ENCODE measurements at regions of chr3 and their contacts with region 1.

Region 1: DNA sequence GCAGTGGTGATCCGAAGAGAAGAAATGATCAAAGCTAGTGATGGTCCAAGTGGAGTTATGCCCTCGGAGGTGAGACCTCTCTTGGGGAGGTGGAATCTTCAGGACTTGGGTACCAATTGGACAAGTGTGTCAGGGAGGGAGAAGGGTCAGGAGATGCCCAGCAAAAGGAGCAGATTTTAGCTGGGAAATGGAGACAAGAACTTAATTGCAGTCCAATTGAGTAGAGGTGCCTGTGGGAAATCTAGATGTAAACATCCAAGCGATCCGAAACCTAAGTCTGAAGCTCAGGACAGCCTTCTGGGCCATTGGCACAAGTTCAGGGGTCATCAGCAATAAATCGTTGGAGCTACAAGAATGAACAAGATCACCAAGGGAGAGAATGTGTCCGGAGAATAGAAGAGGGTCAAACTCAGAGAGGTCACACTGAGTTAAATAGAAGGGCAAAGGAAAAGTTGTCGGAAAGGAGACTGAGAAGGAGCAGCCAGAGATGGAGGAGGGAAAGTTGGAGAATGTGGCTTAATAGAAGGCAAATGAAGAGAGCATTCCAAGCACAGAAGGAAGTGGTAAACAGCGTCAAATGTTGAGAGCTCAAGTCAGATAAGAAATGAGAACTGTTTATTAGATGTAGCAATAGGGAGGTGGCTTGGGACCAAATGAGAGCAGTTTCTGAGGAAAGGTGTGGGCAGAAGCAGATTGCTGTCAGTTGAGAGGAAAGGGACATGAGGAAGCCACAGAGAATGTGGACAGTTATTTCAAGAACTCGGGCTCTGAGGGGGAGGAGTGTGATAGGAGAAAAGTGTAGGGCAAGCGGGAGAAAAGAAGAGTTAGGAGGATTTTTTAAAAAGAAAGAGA is 64.2 kb upstream of the FNDC3B start:
- DNase-seq: no peak
- H3K4me3 Mint-ChIP-seq: no peak overlapping the region
- H3K27ac Mint-ChIP-seq: no peak overlapping the region
- H3K4me1 Mint-ChIP-seq: peaks cover 9% of the 10 kb centered on the region
- H3K27me3 Mint-ChIP-seq: no peaks in the 10 kb centered on the region

Region 2: DNA sequence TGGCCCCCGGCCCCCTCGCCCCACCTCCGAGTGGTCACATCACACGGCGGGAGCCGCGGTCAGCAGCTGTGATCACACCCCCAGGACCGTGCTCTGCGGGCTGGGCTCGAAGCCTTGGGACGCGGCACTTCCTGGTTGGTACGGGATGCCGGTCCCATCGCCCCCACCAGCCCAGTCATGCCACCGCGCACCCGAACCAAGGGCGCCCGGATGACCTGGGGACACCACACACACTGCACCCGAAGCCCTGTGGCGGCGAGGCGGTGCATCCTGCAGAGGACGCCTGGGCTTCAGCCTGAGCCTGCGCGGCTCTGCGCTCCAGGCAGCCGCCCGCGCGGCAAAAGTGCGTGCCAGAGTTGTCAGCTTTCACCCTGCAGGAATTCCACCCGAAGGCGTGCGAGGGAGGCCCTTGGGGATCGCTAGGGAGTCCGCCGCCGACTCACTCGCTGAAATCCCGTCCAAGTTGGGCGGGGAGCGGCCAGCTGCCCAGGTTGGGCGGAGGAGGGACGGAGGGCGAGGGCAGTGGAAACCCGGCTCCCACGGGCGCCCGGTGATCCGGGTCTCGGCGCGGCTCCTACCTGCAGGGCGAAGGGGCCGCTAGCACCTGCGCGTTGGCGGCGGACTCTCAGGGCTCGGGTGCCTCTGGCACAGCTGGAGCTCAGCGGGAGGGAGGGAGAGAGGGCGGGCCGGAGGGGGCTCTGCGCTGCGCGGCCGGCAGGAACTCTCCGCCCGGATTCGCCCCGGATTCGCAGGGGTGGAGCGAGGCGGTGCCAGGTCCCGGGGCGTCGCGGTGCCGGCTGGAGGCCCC is 165.2 kb before region 1 on chr3 and contains the start of gene PLD1:
- intact Hi-C with region 1: loop called (anchors 10 kb)
- DNase-seq: peak; percentile 51
- H3K4me3 Mint-ChIP-seq: peak within 1 kb of the TSS; percentile 77
- H3K27ac Mint-ChIP-seq: peak within 1 kb of the TSS; percentile 47
- H3K4me1 Mint-ChIP-seq: peaks cover 43% of the 10 kb centered on the region
- H3K27me3 Mint-ChIP-seq: peaks cover 24% of the 10 kb centered on the region
- total RNA-seq, gene PLD1: 1.0 and 1.1 TPM in 2 replicates

Region 3: GRCh38 chr3:171874251-171874679 is 100.9 kb before region 1 on chr3:
- intact Hi-C with region 1: loop called (anchors 10 kb)
- DNase-seq: no peak
- H3K4me3 Mint-ChIP-seq: no peak overlapping the region
- H3K27ac Mint-ChIP-seq: no peak overlapping the region
- H3K4me1 Mint-ChIP-seq: peaks cover 24% of the 10 kb centered on the region
- H3K27me3 Mint-ChIP-seq: peaks cover 20% of the 10 kb centered on the region

Region 4: DNA sequence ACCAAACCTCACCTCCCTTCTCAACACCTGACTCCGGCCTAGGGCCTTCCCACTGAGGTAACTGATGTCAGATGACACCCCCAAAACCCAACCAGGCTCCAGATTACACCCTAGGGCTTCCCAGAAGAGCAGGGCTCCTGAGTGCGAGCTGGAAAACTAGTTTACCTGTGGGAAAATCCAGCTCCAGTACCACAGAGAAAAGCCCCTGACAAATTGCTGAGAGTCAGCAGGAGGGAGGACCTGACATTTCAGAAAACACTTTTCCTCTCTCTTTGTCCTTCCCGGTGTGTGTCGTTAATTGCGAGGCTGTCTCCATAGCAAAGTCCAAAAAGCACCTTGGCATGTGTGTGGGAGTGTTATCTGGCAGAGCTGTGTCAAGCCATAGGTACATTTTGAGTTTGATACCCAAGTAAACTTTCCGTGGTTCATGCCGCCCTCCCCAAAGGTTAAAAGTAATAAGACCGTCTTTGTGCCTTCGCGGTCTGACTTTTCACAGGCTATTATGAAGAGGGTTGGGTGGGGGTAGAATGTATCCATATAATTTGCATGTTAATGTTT is 15.6 kb before region 1 on chr3:
- intact Hi-C with region 1: loop called (anchors 2 kb)
- DNase-seq: no peak
- H3K4me3 Mint-ChIP-seq: no peak overlapping the region
- H3K27ac Mint-ChIP-seq: peak overlapping the region; percentile 42
- H3K4me1 Mint-ChIP-seq: peaks cover 17% of the 10 kb centered on the region
- H3K27me3 Mint-ChIP-seq: peaks cover 2% of the 10 kb centered on the region

Region 5: GRCh38 chr3:172087602-172088580 is 112.7 kb after region 1 on chr3:
- intact Hi-C with region 1: loop called (anchors 5 kb)
- DNase-seq: no peak
- H3K4me3 Mint-ChIP-seq: no peak overlapping the region
- H3K27ac Mint-ChIP-seq: peak overlapping the region; percentile 62
- H3K4me1 Mint-ChIP-seq: peaks cover 55% of the 10 kb centered on the region
- H3K27me3 Mint-ChIP-seq: no peaks in the 10 kb centered on the region